Naive thymus-derived CD4-positive, alpha-beta T cell (primary cell): ENCODE measurements at regions of chr1 and their contacts with region 1.

Region 1: DNA sequence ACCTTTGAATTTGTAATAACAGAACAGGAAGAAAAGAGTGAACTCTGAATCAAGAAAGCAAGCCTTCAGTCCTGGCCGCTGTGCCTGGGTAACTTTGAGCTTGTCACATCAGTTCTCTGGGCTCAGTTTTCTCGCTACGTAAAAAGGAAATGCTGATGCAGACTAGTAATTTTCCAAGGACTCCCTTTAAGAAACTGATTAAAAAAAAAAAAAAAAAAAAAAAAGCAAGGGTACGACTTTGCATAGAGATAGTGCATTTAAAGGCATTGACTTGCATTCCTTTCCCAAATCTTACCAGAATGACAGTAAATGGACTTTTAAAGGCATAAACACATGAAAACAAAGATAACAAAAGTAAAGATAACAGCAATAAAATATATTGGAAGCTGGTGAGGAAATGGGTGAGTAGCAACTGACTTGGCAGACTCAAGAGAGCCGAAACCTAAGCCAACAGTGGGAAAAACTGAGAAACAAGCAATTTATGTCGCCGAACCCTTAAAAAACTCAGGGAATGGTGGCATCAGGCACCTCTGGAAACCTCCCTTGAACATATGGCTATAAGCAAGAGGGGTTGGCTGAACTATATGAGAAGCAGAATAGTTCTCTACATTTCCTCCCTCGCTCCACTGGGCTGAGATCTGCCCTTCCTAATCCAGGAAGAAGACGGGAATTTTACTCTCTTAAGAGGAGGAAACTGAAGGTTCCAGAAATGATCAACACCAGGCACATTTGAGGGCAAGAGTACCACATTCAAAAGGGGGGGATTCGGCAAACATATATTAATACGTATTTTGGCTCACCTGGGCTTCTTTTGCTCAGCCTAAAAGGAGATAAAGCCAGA is 189.2 kb downstream of the CDC7 start:
- DNase-seq: no peak
- ATAC-seq: no peak
- H3K4me3 ChIP-seq: no peak overlapping the region
- H3K4me3 Mint-ChIP-seq: no peak overlapping the region
- H3K27ac ChIP-seq: no peak overlapping the region
- H3K27ac Mint-ChIP-seq: peak overlapping the region in 2 of 9 donors; percentile 34 to 41
- H3K4me1 ChIP-seq: peaks cover 4 to 10% of the 10 kb centered on the region in 2 donors
- H3K4me1 Mint-ChIP-seq: peaks cover 4 to 29% (median 14%) of the 10 kb centered on the region in 7 donors
- H3K27me3 ChIP-seq: no peaks in the 10 kb centered on the region
- H3K27me3 Mint-ChIP-seq: no peaks in the 10 kb centered on the region

Region 2: DNA sequence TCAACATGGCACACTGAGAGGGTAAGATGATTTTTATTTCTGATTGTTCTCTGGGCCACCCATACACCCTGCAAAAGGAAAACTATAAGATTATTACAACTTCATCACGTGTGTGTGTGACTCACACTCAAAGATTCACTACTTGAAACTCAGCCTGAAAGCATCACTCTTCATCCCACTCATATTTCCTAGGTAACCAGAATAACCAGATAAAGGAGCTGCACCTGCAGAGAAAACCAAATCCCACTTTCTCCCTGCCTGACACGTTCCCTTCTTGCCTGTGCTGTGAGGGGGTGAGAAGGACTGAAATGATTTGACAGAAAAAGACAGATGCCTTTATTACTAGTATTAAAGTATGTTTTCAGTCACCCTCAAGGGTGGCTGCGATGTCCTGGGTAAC is 64.5 kb after region 1 on chr1:
- CTCF ChIA-PET with region 1: no interaction called
- POLR2A ChIA-PET with region 1: no interaction called
- intact Hi-C with region 1: loop called in 1 of 2 experiments (anchors 2 kb)
- DNase-seq: peak in 1 of 9 donors; percentile 58
- ATAC-seq: peak; percentile 31
- H3K4me3 ChIP-seq: no peak overlapping the region
- H3K4me3 Mint-ChIP-seq: no peak overlapping the region
- H3K27ac ChIP-seq: no peak overlapping the region
- H3K27ac Mint-ChIP-seq: peak overlapping the region in 2 of 9 donors; percentile 3 to 30
- H3K4me1 ChIP-seq: peaks cover 0 to 22% of the 10 kb centered on the region in 2 donors
- H3K4me1 Mint-ChIP-seq: peaks cover 0 to 27% (median 0%) of the 10 kb centered on the region in 7 donors
- H3K27me3 ChIP-seq: no peaks in the 10 kb centered on the region
- H3K27me3 Mint-ChIP-seq: peaks cover 0 to 2% (median 0%) of the 10 kb centered on the region in 5 donors

Region 3: DNA sequence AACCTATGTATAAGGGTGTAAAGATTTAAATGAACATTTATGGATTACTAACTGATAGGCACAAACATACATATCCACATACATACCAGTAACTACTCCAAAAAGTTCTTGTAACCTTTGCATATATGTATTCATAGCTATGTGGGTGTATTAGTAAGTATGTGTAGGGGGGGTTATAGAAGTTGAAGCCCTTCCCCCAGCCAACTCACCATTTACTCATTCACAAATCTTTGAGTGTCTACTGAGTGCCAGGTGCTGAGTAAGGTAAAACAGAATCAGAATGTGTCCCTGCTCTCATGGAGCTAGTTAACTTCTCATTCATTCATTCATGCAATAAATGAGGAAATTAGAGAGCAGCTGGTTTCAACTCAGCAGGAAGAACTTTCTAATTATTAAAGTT is 529.2 kb after region 1 on chr1:
- CTCF ChIA-PET with region 1: no interaction called
- POLR2A ChIA-PET with region 1: no interaction called
- intact Hi-C with region 1: no loop called
- DNase-seq: no peak
- ATAC-seq: no peak
- H3K4me3 ChIP-seq: no peak overlapping the region
- H3K4me3 Mint-ChIP-seq: no peak overlapping the region
- H3K27ac ChIP-seq: no peak overlapping the region
- H3K27ac Mint-ChIP-seq: no peak overlapping the region
- H3K4me1 ChIP-seq: no peaks in the 10 kb centered on the region
- H3K4me1 Mint-ChIP-seq: no peaks in the 10 kb centered on the region
- H3K27me3 ChIP-seq: no peaks in the 10 kb centered on the region
- H3K27me3 Mint-ChIP-seq: no peaks in the 10 kb centered on the region